Cardiac septum (tissue), 1 donor: ENCODE measurements at regions of chr9 and their contacts with region 1.

Region 1: GRCh38 chr9:127437497-127438264 is 13.5 kb downstream of the ZNF79 start:
- DNase-seq: no peak

Region 2: GRCh38 chr9:127402401-127403090 is 35.1 kb before region 1 on chr9:
- intact Hi-C with region 1: loop called (anchors 5 kb)
- DNase-seq: peak; percentile 63